ENCODE measurements at regions of chr19 and their contacts with region 1.

Region 1: DNA sequence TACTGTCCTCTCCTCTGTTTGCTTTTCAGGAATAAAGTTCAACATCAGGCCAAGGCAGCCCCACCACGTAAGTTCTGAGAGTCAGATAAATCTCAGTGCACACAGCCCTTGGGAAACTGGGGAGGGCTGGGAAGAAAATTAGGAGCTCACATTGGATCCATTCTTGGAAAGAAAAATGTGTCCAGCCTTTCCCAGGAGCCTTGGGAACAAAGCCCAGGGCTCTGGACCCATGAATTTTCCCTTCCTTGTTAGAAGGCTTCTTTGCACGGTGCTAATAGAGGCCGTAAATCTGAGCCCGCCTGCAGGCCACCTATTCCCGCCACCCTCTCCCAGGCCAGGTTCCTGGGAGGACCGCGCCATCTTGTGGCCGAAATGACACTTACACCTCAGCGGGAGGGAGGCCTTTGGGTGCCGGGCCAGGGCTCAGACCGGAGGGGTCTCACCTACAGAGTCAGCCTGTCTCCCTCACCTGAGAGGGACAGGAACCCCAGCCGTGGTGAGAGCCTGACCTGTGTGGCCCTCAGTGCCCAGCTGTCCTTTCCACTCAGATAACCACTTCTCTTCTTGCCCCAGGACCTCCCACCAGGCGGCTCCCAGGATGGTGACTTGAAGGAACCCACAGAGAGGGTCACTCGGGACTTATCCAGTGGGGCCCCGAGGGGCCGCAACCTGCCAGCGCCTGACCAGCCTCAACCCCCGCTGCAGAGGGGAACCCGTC is 25.1 kb upstream of the KCTD15 start:
- DNase-seq: peak; percentile 58 to 74
- ATAC-seq: peak; percentile 63 to 87 (median 77)
- H3K4me3 ChIP-seq: no peak overlapping the region
- H3K27ac ChIP-seq: no peak overlapping the region
- H3K4me1 ChIP-seq: no peaks in the 10 kb centered on the region
- H3K27me3 ChIP-seq: peaks cover 0 to 48% (median 19%) of the 10 kb centered on the region in 7 donors
- CTCF ChIP-seq: peak; percentile 81 to 91 (median 85)

Region 2: GRCh38 chr19:33235269-33235995 is 536.1 kb before region 1 on chr19:
- intact Hi-C with region 1: loop called in 8 of 10 experiments (anchors 2 to 10 kb)
- DNase-seq: peak; percentile 71 to 82
- ATAC-seq: peak; percentile 56 to 79 (median 71)
- H3K4me3 ChIP-seq: no peak overlapping the region
- H3K27ac ChIP-seq: no peak overlapping the region
- H3K4me1 ChIP-seq: peaks cover 0 to 13% (median 0%) of the 10 kb centered on the region in 9 donors
- H3K27me3 ChIP-seq: peaks cover 4 to 48% (median 24%) of the 10 kb centered on the region in 7 donors
- CTCF ChIP-seq: peak; percentile 74 to 95 (median 91)

Region 3: DNA sequence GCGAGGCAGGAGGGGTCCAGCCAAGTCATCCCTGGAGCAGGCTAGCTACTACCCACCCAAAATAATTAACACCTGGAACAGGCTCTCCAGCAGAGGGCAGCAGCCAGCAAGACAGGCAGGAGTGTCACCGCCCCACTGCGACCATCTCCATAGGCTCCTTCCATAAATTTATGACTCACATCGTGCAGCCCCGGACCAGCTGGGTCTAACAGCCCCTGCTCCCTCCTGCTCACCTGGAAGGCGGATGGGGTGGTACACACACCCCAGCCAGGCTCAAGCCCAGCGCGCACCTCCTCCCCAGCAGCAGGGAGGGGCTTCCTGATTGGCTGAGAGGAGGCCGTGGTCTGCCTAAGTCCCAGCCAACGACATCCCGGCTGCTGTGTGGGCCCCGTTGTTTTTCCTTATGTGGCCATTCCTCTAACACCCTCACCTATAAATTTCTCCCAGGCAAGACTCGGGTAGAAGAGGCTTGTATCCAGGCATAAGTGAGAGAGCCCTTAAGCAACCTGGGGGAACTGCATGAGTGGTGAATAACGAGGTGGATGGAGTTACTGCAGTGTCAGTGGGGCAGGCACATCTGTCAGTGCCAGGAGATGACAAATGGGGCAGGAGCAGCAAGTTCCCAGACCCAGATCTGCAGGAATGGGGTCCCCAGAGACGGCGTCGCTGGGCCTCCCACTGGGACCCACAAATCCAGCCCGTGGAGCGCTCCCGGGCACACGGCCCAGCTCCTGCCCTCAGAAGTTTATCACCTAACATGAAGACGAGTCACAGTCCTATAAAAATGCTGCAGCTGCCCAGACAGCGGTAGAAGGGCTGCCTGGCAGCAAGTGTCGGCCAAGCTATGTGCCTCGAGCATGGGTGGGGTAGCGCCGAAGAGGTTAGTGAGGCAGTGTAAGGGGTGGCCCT is 355.0 kb before region 1 on chr19:
- intact Hi-C with region 1: loop called in 2 of 10 experiments (anchors 5 kb)
- DNase-seq: peak; percentile 45 to 57
- ATAC-seq: peak in 7 of 8 donors; percentile 28 to 69 (median 57)
- H3K4me3 ChIP-seq: peak overlapping the region in 2 of 10 donors; percentile 4 to 6
- H3K27ac ChIP-seq: no peak overlapping the region
- H3K4me1 ChIP-seq: peaks cover 0 to 8% (median 0%) of the 10 kb centered on the region in 9 donors
- H3K27me3 ChIP-seq: no peaks in the 10 kb centered on the region
- CTCF ChIP-seq: peak; percentile 35 to 73 (median 65)

Region 4: DNA sequence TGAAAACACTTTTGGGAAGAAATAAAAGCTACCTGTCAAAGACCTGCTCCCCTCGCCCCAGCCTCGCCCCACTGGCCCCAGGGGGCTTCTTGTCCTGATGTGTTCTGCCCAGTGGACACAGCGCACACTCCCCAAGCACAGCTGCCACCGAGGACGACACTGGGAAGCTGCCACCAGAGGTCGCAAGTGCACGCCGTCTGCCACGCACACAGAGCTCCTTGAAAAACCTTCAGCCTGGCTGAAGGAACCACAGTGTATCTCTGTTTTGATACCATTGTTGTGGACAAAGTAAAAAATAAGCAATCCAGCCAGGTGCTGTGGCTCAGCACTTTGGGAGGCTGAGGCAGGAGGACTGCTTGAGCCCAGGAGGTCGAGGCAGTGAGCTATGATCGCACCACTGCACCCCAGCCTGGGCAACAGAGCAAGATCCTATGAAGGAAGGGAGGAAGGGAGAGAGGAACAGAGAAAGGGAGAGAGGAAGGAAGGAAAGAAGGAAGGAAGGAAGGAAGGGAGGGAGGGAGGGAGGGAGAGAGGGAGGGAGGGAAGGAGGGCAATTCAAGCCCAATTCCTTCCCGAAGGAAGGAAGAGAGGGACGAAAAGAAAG is 340.8 kb before region 1 on chr19:
- intact Hi-C with region 1: loop called (anchors 1 to 5 kb)
- DNase-seq: peak; percentile 51 to 70
- ATAC-seq: peak; percentile 58 to 86 (median 78)
- H3K4me3 ChIP-seq: no peak overlapping the region
- H3K27ac ChIP-seq: no peak overlapping the region
- H3K4me1 ChIP-seq: no peaks in the 10 kb centered on the region
- H3K27me3 ChIP-seq: no peaks in the 10 kb centered on the region
- CTCF ChIP-seq: peak; percentile 60 to 83 (median 80)

Region 5: GRCh38 chr19:33580026-33580644 is 191.4 kb before region 1 on chr19:
- intact Hi-C with region 1: no loop called
- DNase-seq: no peak
- ATAC-seq: no peak
- H3K4me3 ChIP-seq: no peak overlapping the region
- H3K27ac ChIP-seq: no peak overlapping the region
- H3K4me1 ChIP-seq: no peaks in the 10 kb centered on the region
- H3K27me3 ChIP-seq: peaks cover 0 to 31% (median 6%) of the 10 kb centered on the region in 7 donors
- CTCF ChIP-seq: no peak